ENCODE measurements at regions of chr10 and their contacts with region 1.

Region 1: DNA sequence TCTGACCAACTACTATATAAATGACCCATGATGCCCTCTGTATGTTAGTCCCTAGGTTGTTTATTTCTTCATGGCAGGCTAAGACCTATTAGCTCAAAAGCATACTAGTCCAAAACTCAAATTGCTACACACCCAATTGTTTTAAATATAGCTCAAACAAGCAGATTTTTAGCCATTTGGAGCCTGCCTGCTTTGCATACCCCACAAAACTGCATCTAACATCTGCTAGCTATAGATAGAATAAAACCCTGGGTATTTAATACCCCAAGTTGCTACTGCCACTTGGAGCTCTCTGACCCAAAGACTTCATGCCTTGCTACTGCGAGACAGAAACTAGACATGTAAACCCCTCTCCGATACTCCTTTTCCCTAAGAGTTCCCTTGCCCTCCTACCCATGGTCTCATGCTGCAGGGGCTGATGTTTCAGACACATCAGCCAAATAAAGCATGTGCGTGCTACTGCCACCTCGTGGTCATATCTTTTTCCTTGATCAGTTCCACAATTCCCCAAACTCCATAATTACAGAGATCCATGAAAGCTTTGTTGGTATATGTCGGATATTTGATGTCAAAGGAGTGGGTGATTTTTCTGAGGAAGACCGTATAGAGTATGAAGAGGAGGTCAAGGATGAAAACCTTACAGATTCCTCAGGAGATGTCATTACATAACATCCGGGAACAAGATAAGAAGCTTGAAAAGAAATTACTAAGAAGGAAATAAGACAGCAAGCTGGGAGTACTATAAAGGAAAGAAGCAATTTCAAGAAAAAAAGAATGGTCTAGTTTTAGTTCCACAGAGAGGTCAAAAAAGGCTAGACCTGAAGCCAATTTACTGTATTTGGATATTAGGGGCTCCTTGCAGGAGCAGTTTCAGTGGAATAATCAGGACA is 386.6 kb downstream of the SH2D4B start:
- DNase-seq: no peak

Region 2: DNA sequence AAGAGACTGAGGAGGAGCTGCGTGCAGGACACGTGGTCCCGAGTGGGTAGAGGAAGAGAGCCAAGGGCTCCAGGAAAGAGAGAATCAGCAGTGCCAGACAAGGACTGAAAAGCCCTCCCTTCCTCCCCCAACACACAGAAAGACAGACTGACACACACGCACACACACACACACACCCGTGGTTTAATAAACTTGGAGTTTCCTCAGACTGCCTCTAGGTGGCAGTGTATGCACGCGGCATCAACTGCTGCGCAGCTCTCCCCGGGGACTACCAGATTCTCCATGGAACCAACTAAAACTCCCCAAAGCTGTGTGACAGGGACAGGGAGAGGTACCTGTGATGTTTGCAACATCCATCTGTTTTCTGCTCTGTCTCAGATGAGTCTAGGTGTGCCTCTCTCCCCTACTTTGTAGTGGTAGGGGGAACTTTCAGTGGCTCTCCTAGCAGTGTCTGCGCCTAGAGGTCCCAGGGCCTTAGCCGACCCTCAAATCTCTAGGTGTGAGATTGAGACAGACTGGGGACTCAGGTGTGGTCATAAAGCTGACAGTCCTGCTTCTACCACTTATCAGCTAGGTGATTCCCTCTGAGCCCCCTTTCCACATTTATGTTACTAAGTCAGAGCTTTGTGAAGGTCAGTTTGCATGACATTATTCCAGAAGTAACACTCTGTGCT is 479.5 kb before region 1 on chr10:
- intact Hi-C with region 1: loop called (anchors 10 kb)
- DNase-seq: no peak

Region 3: GRCh38 chr10:80699602-80700039 is 224.7 kb before region 1 on chr10:
- intact Hi-C with region 1: loop called (anchors 2 kb)
- DNase-seq: peak; percentile 92

Region 4: DNA sequence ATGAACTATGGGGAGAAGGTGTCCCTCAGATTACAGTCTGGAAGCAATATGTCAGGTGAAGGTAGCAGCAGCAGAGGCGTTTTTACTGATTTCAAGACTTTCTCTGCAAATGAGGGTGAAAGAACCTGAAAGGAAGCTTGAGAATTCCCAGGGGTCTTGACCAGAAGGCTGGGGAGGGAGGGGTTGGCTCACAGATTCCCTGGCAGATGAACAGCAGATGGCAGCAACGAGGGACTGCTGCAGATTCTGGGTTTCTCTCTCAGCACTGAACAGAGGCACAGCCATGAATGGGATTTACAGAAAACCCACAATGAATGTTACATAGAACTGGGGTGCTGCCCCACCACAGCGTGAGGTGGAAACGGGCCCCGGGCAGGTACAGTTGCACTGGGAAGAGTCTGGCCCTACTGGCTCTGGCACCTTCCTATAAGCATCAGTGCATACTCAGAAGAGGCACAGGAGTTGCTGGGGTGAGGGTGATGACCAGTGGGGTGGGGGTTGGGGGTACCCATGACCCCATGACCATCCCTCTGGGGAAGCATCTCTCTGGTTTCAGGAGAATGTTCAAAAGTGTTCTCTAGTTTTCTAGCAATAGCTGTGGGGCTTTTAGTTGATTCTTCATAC is 68.8 kb before region 1 on chr10:
- intact Hi-C with region 1: no loop called
- DNase-seq: no peak

Region 5: GRCh38 chr10:80964955-80965614 is 40.8 kb after region 1 on chr10:
- intact Hi-C with region 1: no loop called
- DNase-seq: no peak

Measured in cardiac septum (tissue), 1 donor.